ENCODE measurements at regions of chr5 and their contacts with region 1.

Region 1: GRCh38 chr5:159444441-159445082 is 114.3 kb upstream of the IL12B start:
- DNase-seq: no peak
- ATAC-seq: peak; percentile 39 to 56

Region 2: DNA sequence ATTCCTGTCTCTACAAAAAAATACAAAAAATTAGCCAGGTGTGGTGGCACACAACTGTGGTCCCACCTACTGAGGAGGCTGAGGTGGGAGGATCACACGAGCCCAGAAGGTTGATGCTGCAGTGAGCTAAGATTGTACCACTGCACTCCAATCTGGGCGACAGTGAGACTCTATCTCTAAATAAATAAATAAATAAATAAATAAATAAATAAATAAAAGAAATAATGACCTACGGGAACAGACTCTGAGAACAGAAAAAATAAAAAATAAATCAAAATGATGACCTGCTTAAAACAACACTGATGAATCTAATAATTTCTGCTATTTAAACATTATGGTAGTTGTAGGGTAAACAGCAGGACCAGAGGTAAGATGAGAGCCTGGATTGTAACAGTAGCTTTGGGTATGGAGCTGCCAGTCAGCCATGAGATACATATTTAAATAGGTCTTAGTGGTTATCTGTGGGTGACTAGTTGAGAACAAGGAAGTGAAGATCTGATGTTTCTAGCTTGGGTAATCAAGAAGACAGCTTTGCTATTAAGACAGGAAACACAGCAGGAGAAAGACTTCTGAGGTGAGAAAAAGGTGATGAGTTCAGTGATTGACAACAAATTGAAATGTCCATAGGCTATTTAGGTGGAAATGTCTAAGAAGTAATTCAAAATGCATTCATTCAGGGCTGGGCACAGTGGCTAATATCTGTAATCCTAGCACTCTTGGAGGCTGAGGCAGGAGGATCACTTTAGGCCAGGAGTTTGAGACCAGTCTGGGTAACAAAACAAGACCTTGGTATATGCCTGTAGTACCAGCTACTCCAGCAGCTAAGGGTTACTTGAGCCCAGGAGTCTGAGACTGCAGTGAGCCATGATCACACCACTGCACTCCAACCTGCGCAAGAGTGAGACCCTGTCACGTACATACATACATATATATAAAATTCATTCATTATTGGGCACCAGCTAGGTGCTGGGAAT is 246.2 kb before region 1 on chr5:
- intact Hi-C with region 1: no loop called
- DNase-seq: no peak
- ATAC-seq: peak in 1 of 2 donors; percentile 51

Region 3: GRCh38 chr5:159412284-159413046 is 32.1 kb before region 1 on chr5:
- intact Hi-C with region 1: no loop called
- DNase-seq: no peak
- ATAC-seq: peak in 1 of 2 donors; percentile 30

Region 4: GRCh38 chr5:159504106-159504856 is 59.7 kb after region 1 on chr5:
- intact Hi-C with region 1: no loop called
- DNase-seq: no peak
- ATAC-seq: peak in 1 of 2 donors; percentile 21

Region 5: DNA sequence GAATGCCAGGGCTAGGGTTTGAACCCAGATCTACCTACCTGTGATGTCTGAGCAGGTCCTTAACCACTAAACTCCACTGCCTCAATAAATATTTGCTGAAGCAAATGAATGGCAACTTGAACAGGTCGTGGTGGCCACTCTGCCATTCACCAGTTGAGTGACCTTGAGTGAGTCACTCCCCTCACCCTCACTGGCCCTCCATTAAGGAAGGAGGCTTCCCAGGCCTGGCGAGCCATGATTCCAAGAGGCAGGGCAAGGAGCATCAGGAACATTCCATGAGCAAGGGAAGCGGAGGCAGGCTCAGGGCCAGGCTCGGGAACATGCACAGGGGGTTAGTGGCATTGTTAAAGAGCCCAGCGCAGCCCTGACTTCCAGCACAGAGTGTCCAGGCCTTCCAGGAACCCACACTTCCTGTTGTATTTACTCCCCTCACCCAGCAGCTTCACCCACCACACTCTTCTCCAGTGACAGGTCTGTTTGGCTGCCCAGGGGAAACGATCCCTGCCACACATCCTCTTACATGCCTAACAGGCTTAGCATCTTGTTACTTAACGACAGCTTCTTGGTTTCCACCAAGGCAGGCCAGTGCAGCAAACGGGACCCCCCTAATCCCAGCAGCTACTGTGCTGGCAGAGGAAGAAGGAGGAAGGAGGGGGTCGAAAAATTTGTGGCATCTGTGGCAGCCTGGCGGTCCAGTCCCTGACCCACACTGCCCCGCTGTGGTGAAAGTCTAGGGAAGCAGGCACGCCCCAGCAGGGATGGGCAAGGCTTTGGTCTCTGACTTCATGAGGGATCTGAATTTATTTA is 520.7 kb after region 1 on chr5:
- intact Hi-C with region 1: loop called in 1 of 2 experiments (anchors 5 kb)
- DNase-seq: peak; percentile 73
- ATAC-seq: peak; percentile 82 to 87

Region 6: DNA sequence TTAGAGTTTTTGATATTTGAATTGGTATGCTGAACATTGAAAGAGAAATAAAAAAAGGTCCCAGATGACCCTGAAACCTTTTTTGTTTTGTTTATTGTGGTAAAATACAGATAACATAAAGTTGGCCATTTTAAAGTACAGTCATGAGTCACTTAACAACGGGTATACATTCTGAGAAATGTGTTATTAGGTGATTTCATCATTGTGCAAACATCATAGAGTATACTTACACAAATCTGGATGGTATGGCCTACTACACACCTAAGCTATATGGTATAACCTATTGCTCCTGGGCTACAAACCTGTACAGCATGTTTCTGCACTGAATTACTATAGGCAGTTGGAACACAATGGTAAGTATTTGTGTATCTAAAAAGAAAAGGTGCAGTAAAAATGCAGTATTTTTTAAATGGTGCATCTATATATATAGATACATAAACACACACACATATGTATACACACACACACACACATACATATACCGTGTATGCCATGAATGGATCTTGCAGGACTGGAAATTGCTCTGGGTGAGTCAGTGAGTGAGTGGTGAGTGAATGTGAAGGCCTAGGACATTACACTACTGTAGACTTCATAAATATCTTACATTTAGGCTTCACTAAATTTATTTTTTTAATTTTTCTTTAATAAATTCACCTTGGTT is 595.4 kb after region 1 on chr5:
- intact Hi-C with region 1: no loop called
- DNase-seq: no peak
- ATAC-seq: no peak